Left colon (tissue), 2 donors: ENCODE measurements at regions of chr5 and their contacts with region 1.

Region 1: GRCh38 chr5:97162045-97162444 is 19.6 kb upstream of the LIX1 start:
- DNase-seq: peak in 1 of 2 donors; percentile 58
- ATAC-seq: peak; percentile 42

Region 2: GRCh38 chr5:96614110-96614691 is 547.8 kb before region 1 on chr5:
- intact Hi-C with region 1: loop called in 1 of 2 experiments (anchors 5 kb)
- DNase-seq: peak; percentile 40 to 55
- ATAC-seq: peak; percentile 72

Region 3: GRCh38 chr5:96752341-96753016 is 409.6 kb before region 1 on chr5:
- intact Hi-C with region 1: loop called in 1 of 2 experiments (anchors 10 kb)
- DNase-seq: no peak
- ATAC-seq: peak; percentile 29

Region 4: GRCh38 chr5:96868603-96869371 is 293.3 kb before region 1 on chr5:
- intact Hi-C with region 1: loop called in 1 of 2 experiments (anchors 5 kb)
- DNase-seq: no peak
- ATAC-seq: peak; percentile 94

Region 5: GRCh38 chr5:97009212-97009898 is 152.7 kb before region 1 on chr5:
- intact Hi-C with region 1: loop called in 1 of 2 experiments (anchors 10 kb)
- DNase-seq: no peak
- ATAC-seq: peak; percentile 46

Region 6: GRCh38 chr5:97085459-97086181 is 76.4 kb before region 1 on chr5:
- intact Hi-C with region 1: no loop called
- DNase-seq: no peak
- ATAC-seq: no peak

Region 7: DNA sequence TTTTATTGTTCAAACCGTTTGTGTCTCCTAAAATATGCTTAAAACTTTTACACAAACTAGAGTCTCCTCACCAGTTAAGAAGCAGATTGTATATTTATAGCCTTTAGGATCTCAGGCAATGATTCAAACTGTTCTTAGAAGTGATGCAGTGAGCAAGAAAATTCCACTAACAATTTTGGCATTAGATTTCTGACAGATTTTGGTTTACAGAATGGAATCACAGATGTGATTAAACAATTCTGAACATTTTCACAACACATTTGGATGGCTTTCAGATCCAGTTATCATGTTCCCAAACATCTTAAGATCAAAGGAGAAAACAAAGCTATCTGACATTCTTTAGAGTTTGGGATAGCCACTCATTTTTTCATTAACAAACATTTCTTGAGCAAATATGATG is 202.7 kb after region 1 on chr5:
- intact Hi-C with region 1: no loop called
- DNase-seq: no peak
- ATAC-seq: no peak